ENCODE measurements at regions of chr1 and their contacts with region 1.

Region 1: DNA sequence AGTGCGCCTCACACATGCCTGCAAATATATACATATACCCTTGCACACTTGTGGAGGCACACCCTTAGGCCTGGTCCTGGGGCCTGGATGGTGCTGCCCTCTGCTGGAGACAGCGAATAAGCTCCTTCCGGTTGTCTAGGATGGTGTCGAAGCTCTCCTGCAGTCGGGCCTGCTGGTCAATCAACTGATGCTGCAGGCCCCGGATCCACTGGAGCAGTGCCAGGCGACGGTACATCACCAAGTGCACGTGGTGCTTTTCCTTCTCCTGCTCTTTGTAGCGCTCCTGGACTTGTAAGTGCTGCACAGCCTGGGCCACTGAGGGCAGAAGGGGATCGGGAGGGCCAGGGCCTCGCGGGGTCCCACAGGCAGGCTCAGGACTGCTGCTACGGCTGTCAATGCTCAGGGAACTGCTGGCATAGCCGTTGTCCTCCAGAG is 3.1 kb downstream of the C1orf216 start:
- DNase-seq: peak; percentile 57 to 85 (median 79)
- ATAC-seq: peak; percentile 63
- H3K4me3 ChIP-seq: no peak overlapping the region
- H3K4me3 Mint-ChIP-seq: peak overlapping the region; percentile 24
- H3K27ac ChIP-seq: no peak overlapping the region
- H3K27ac Mint-ChIP-seq: no peak overlapping the region
- H3K4me1 ChIP-seq: peaks cover 10% of the 10 kb centered on the region
- H3K4me1 Mint-ChIP-seq: peaks cover 30% of the 10 kb centered on the region
- H3K27me3 ChIP-seq: no peaks in the 10 kb centered on the region
- H3K27me3 Mint-ChIP-seq: no peaks in the 10 kb centered on the region
- CTCF ChIP-seq: peak; percentile 89

Region 2: GRCh38 chr1:34549199-34549598 is 1166.4 kb before region 1 on chr1:
- CTCF ChIA-PET with region 1: no interaction called
- POLR2A ChIA-PET with region 1: no interaction called
- intact Hi-C with region 1: no loop called
- DNase-seq: no peak
- ATAC-seq: no peak
- H3K4me3 ChIP-seq: no peak overlapping the region
- H3K4me3 Mint-ChIP-seq: no peak overlapping the region
- H3K27ac ChIP-seq: no peak overlapping the region
- H3K27ac Mint-ChIP-seq: no peak overlapping the region
- H3K4me1 ChIP-seq: no peaks in the 10 kb centered on the region
- H3K4me1 Mint-ChIP-seq: no peaks in the 10 kb centered on the region
- H3K27me3 ChIP-seq: peaks cover 0 to 4% of the 10 kb centered on the region in 2 experiments
- H3K27me3 Mint-ChIP-seq: peaks cover 33% of the 10 kb centered on the region
- CTCF ChIP-seq: no peak

Region 3: GRCh38 chr1:35461966-35462651 is 253.5 kb before region 1 on chr1:
- CTCF ChIA-PET with region 1: no interaction called
- POLR2A ChIA-PET with region 1: no interaction called
- intact Hi-C with region 1: no loop called
- DNase-seq: no peak
- ATAC-seq: no peak
- H3K4me3 ChIP-seq: no peak overlapping the region
- H3K4me3 Mint-ChIP-seq: no peak overlapping the region
- H3K27ac ChIP-seq: no peak overlapping the region
- H3K27ac Mint-ChIP-seq: no peak overlapping the region
- H3K4me1 ChIP-seq: no peaks in the 10 kb centered on the region
- H3K4me1 Mint-ChIP-seq: peaks cover 5% of the 10 kb centered on the region
- H3K27me3 ChIP-seq: no peaks in the 10 kb centered on the region
- H3K27me3 Mint-ChIP-seq: no peaks in the 10 kb centered on the region
- CTCF ChIP-seq: no peak

Region 4: GRCh38 chr1:35497571-35497970 is 218.0 kb before region 1 on chr1:
- CTCF ChIA-PET with region 1: no interaction called
- POLR2A ChIA-PET with region 1: no interaction called
- intact Hi-C with region 1: no loop called
- DNase-seq: no peak
- ATAC-seq: no peak
- H3K4me3 ChIP-seq: no peak overlapping the region
- H3K4me3 Mint-ChIP-seq: no peak overlapping the region
- H3K27ac ChIP-seq: no peak overlapping the region
- H3K27ac Mint-ChIP-seq: no peak overlapping the region
- H3K4me1 ChIP-seq: no peaks in the 10 kb centered on the region
- H3K4me1 Mint-ChIP-seq: peaks cover 30% of the 10 kb centered on the region
- H3K27me3 ChIP-seq: no peaks in the 10 kb centered on the region
- H3K27me3 Mint-ChIP-seq: no peaks in the 10 kb centered on the region
- CTCF ChIP-seq: no peak

Region 5: GRCh38 chr1:35577071-35577998 is 138.2 kb before region 1 on chr1:
- CTCF ChIA-PET with region 1: interaction called, 28 read pairs
- POLR2A ChIA-PET with region 1: interaction called, 7 read pairs
- intact Hi-C with region 1: no loop called
- DNase-seq: peak; percentile 27 to 85 (median 71)
- ATAC-seq: peak; percentile 78
- H3K4me3 ChIP-seq: peak overlapping the region; percentile 49 to 87
- H3K4me3 Mint-ChIP-seq: peak overlapping the region; percentile 90
- H3K27ac ChIP-seq: peak overlapping the region; percentile 4 to 54
- H3K27ac Mint-ChIP-seq: peak overlapping the region; percentile 82
- H3K4me1 ChIP-seq: peaks cover 24% of the 10 kb centered on the region
- H3K4me1 Mint-ChIP-seq: peaks cover 26% of the 10 kb centered on the region
- H3K27me3 ChIP-seq: no peaks in the 10 kb centered on the region
- H3K27me3 Mint-ChIP-seq: peaks cover 3% of the 10 kb centered on the region
- CTCF ChIP-seq: no peak

Region 6: GRCh38 chr1:35615440-35615839 is 100.1 kb before region 1 on chr1:
- CTCF ChIA-PET with region 1: no interaction called
- POLR2A ChIA-PET with region 1: no interaction called
- intact Hi-C with region 1: no loop called
- DNase-seq: no peak
- ATAC-seq: no peak
- H3K4me3 ChIP-seq: no peak overlapping the region
- H3K4me3 Mint-ChIP-seq: no peak overlapping the region
- H3K27ac ChIP-seq: no peak overlapping the region
- H3K27ac Mint-ChIP-seq: no peak overlapping the region
- H3K4me1 ChIP-seq: no peaks in the 10 kb centered on the region
- H3K4me1 Mint-ChIP-seq: peaks cover 23% of the 10 kb centered on the region
- H3K27me3 ChIP-seq: no peaks in the 10 kb centered on the region
- H3K27me3 Mint-ChIP-seq: no peaks in the 10 kb centered on the region
- CTCF ChIP-seq: no peak

Region 7: DNA sequence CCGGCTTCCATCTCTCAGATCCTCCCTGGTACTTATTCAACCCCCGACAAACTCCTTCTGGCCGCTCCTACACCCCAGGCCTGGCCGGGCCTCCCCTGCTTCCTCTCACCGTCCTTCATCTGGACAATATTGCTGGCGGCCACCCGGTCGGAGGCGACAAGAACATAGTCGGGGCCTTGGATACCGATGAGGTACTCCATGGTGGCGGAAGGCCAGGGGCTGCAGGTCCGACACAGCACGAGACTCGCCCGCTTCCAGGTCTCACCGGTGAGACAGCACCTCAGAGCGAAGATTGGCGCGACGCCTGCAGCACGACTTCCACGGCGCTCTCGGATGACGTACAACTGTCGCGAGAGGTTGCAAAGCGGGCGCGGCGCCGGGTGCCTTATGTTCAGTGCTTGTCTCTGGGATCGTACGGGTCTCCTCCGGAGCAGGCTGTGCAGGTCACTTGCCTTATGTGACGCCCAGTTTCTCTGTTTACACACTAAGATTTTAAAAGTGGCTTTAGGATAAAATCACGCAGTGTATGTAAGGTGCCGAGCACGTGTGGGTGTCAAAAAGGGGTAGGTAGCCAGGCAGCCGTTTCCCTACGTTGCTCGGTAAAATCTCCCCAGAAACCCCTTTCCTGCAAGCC is 74.2 kb before region 1 on chr1 and contains the start of gene PSMB2:
- CTCF ChIA-PET with region 1: no interaction called
- POLR2A ChIA-PET with region 1: no interaction called
- intact Hi-C with region 1: loop called (anchors 2 to 5 kb)
- DNase-seq: peak; percentile 91 to 99 (median 97)
- ATAC-seq: peak; percentile 94
- H3K4me3 ChIP-seq: peak within 1 kb of the TSS; percentile 94 to 97
- H3K4me3 Mint-ChIP-seq: peak within 1 kb of the TSS; percentile 100
- H3K27ac ChIP-seq: peak within 1 kb of the TSS; percentile 89 to 93
- H3K27ac Mint-ChIP-seq: peak within 1 kb of the TSS; percentile 97
- H3K4me1 ChIP-seq: peaks cover 33% of the 10 kb centered on the region
- H3K4me1 Mint-ChIP-seq: peaks cover 37% of the 10 kb centered on the region
- H3K27me3 ChIP-seq: peaks cover 0 to 8% of the 10 kb centered on the region in 2 experiments
- H3K27me3 Mint-ChIP-seq: peaks cover 16% of the 10 kb centered on the region
- CTCF ChIP-seq: no peak
- total RNA-seq, gene PSMB2: 36.8 to 38.8 TPM

Region 8: DNA sequence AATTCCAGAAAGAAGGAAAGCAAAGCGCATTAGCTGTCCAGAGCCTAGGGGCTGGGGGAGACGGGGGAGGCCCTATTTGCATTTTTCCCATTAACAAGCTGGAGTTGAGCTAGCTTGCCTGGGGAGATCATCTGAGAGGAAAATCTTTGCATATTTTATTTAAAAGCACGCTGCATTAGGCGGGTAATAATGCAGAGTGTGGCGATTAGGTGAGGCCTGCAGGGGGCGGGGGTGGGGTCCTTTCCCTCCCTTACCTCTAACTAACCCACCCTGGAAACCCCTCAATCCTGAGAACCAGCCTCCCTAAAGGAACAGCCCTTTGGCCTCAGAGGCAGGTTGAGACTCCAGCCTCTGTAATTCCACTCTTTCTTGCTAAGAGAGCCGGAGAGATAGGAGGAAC is 13.1 kb before region 1 on chr1:
- CTCF ChIA-PET with region 1: interaction called, 26 read pairs
- POLR2A ChIA-PET with region 1: interaction called, 3 read pairs
- intact Hi-C with region 1: no loop called
- DNase-seq: no peak
- ATAC-seq: no peak
- H3K4me3 ChIP-seq: no peak overlapping the region
- H3K4me3 Mint-ChIP-seq: no peak overlapping the region
- H3K27ac ChIP-seq: no peak overlapping the region
- H3K27ac Mint-ChIP-seq: no peak overlapping the region
- H3K4me1 ChIP-seq: peaks cover 5% of the 10 kb centered on the region
- H3K4me1 Mint-ChIP-seq: peaks cover 8% of the 10 kb centered on the region
- H3K27me3 ChIP-seq: peaks cover 0 to 5% of the 10 kb centered on the region in 2 experiments
- H3K27me3 Mint-ChIP-seq: peaks cover 64% of the 10 kb centered on the region
- CTCF ChIP-seq: no peak

Region 9: DNA sequence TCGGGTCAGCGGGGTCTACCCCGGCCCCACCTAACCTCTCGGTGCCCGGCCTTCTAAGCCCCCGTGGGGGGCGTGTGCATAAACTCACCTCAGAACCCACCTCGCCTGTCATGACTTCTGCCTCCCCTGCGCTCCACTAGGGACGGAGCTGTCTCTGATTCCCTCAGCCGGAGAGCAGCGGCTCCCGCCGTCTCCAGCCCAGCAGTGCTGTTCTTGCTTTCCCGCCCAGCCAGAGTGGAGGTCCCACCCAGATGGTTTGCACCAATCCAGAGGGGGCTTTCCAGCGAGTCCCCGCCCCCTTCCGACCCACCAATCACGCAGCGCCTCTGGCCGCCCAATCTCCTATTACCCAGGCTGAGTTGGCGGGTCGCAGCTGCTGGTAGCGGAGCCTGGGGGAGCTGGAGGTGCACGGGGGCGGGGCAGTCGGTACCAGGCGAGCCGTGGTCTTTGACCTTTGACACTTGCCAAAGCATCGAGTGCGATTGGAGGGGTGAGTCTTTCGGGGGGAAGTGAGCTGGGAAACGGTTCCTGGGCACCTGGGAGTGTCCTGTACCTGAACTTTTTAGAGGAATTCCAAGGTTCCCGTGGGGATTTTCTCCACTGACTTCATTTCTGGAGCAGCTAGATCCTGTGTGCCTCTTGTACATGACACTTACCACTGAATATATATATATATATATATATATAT is 54.3 kb after region 1 on chr1 and contains the start of gene CLSPN:
- CTCF ChIA-PET with region 1: interaction called, 17 read pairs
- POLR2A ChIA-PET with region 1: interaction called, 4 read pairs
- intact Hi-C with region 1: loop called in 1 of 2 experiments (anchors 5 kb)
- DNase-seq: peak; percentile 86 to 96 (median 93)
- ATAC-seq: peak; percentile 94
- H3K4me3 ChIP-seq: peak within 1 kb of the TSS; percentile 90 to 97
- H3K4me3 Mint-ChIP-seq: peak within 1 kb of the TSS; percentile 99
- H3K27ac ChIP-seq: peak within 1 kb of the TSS; percentile 61 to 81
- H3K27ac Mint-ChIP-seq: peak within 1 kb of the TSS; percentile 92
- H3K4me1 ChIP-seq: peaks cover 5% of the 10 kb centered on the region
- H3K4me1 Mint-ChIP-seq: peaks cover 8% of the 10 kb centered on the region
- H3K27me3 ChIP-seq: no peaks in the 10 kb centered on the region
- H3K27me3 Mint-ChIP-seq: no peaks in the 10 kb centered on the region
- CTCF ChIP-seq: no peak
- total RNA-seq, gene CLSPN: 0.41 to 0.81 TPM